Heart right ventricle (tissue), 16 donors: ENCODE measurements at regions of chr17 and their contacts with region 1.

Region 1: DNA sequence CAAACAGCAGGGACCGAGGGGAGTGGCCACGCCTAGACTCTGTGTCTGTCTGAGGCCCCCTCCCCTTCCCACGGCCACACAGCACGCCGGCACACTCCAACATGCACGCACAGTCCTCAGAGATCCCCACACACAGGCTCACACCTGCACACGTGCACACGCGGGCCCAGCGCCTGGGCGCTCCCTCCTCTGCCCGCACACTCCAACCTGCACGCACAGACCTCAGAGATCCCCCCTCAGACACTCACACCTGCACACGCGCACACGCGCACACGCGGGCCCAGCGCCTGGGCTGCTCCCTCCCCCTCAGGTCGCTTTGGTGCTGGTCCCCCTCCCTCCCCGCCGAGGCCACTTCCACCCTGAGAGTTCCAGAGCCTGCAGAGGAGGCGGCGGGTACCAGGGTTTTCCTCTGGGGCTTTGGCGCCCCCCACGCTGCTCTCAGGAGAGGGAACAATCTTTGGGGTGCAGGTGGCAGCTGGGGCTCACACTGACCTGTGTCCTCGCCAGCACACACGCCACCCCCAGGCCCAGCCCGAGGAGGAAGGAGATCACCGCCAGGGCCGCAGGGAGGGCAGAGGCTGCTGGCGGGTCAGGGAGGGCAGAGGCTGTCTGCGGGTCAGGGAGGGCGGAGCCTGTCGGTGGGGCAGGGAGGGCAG is 1.6 kb downstream of the CD7 start:
- DNase-seq: peak in 1 of 2 donors; percentile 15
- ATAC-seq: peak in 6 of 8 donors; percentile 14 to 29 (median 24)
- H3K4me3 ChIP-seq: peak overlapping the region in 4 of 10 donors; percentile 5 to 44 (median 18)
- H3K27ac ChIP-seq: peak overlapping the region in 1 of 10 donors; percentile 72
- H3K4me1 ChIP-seq: peaks cover 0 to 20% (median 3%) of the 10 kb centered on the region in 9 donors
- H3K27me3 ChIP-seq: peaks cover 17 to 63% (median 48%) of the 10 kb centered on the region in 7 donors
- CTCF ChIP-seq: no peak

Region 2: GRCh38 chr17:82205719-82206508 is 109.9 kb before region 1 on chr17:
- intact Hi-C with region 1: loop called in 9 of 10 experiments (anchors 1 to 5 kb)
- DNase-seq: peak; percentile 80 to 81
- ATAC-seq: peak; percentile 68 to 90 (median 86)
- H3K4me3 ChIP-seq: peak overlapping the region in 6 of 10 donors; percentile 3 to 27 (median 13)
- H3K27ac ChIP-seq: peak overlapping the region in 8 of 10 donors; percentile 48 to 84 (median 72)
- H3K4me1 ChIP-seq: peaks cover 0 to 27% (median 11%) of the 10 kb centered on the region in 9 donors
- H3K27me3 ChIP-seq: no peaks in the 10 kb centered on the region
- CTCF ChIP-seq: peak; percentile 80 to 98 (median 92)

Region 3: DNA sequence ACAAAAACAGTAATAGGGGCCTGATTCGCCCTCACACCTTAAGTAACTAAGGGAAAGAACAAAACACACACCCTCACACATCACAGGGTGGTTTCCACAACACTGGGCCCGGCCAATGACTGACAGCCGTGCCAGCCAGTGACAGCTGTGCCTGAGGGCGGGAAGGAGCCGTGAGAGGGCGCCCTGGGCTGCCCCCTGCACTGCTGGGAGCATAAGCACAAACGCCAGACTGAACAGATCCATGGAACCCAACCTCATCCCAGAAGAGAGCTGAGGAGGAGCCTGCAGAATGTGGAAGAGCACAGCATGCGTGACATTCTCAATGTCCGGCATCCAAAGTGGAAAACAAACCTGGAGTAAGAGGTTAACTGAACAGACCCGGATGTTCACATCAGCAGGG is 58.4 kb before region 1 on chr17:
- intact Hi-C with region 1: loop called in 1 of 10 experiments (anchors 5 kb)
- DNase-seq: peak in 1 of 2 donors; percentile 56
- ATAC-seq: peak in 7 of 8 donors; percentile 29 to 85 (median 70)
- H3K4me3 ChIP-seq: no peak overlapping the region
- H3K27ac ChIP-seq: no peak overlapping the region
- H3K4me1 ChIP-seq: peaks cover 0 to 9% (median 0%) of the 10 kb centered on the region in 9 donors
- H3K27me3 ChIP-seq: no peaks in the 10 kb centered on the region
- CTCF ChIP-seq: no peak

Region 4: GRCh38 chr17:82283208-82283749 is 32.6 kb before region 1 on chr17:
- intact Hi-C with region 1: no loop called
- DNase-seq: no peak
- ATAC-seq: no peak
- H3K4me3 ChIP-seq: no peak overlapping the region
- H3K27ac ChIP-seq: no peak overlapping the region
- H3K4me1 ChIP-seq: peaks cover 2 to 42% (median 15%) of the 10 kb centered on the region in 9 donors
- H3K27me3 ChIP-seq: no peaks in the 10 kb centered on the region
- CTCF ChIP-seq: no peak

Region 5: GRCh38 chr17:82528484-82529265 is 212.8 kb after region 1 on chr17:
- intact Hi-C with region 1: no loop called
- DNase-seq: peak; percentile 40 to 70
- ATAC-seq: peak; percentile 78 to 95 (median 90)
- H3K4me3 ChIP-seq: no peak overlapping the region
- H3K27ac ChIP-seq: peak overlapping the region; percentile 59 to 89 (median 72)
- H3K4me1 ChIP-seq: peaks cover 22 to 98% (median 81%) of the 10 kb centered on the region in 9 donors
- H3K27me3 ChIP-seq: no peaks in the 10 kb centered on the region
- CTCF ChIP-seq: peak in 7 of 9 donors; percentile 37 to 58 (median 49)